Vagina (tissue), 2 donors: ENCODE measurements at regions of chr12 and their contacts with region 1.

Region 1: DNA sequence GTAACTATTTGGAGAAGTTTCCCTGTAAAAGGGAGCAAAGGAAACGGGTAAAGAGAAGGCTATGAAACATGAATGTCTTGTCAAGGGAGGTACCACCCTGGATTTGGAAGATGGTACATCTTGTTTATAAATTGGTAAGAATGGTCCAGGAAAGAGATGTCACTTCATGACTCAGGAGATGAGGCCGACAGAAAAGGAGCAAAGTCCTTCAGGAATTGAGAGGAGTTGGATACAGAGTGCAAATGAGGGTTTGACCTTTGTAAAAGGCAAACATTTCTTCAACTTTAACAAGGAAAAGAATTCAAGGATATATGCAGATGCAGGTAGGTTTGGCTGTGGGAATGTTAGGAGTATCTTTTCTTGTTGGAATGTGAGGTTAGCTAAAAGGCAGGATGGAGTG is 30.8 kb downstream of the NDUFA9 start:
- DNase-seq: no peak
- H3K4me3 ChIP-seq: no peak overlapping the region
- H3K27ac ChIP-seq: no peak overlapping the region
- H3K4me1 ChIP-seq: no peaks in the 10 kb centered on the region
- H3K27me3 ChIP-seq: no peaks in the 10 kb centered on the region
- CTCF ChIP-seq: no peak
- POLR2A ChIP-seq: no peak

Region 2: GRCh38 chr12:4356041-4356327 is 323.7 kb before region 1 on chr12:
- intact Hi-C with region 1: no loop called
- DNase-seq: no peak
- H3K4me3 ChIP-seq: no peak overlapping the region
- H3K27ac ChIP-seq: no peak overlapping the region
- H3K4me1 ChIP-seq: no peaks in the 10 kb centered on the region
- H3K27me3 ChIP-seq: no peaks in the 10 kb centered on the region
- CTCF ChIP-seq: no peak
- POLR2A ChIP-seq: no peak

Region 3: GRCh38 chr12:5601783-5602182 is 922.1 kb after region 1 on chr12:
- intact Hi-C with region 1: loop called (anchors 5 kb)
- DNase-seq: no peak
- H3K4me3 ChIP-seq: no peak overlapping the region
- H3K27ac ChIP-seq: no peak overlapping the region
- H3K4me1 ChIP-seq: no peaks in the 10 kb centered on the region
- H3K27me3 ChIP-seq: no peaks in the 10 kb centered on the region
- CTCF ChIP-seq: no peak
- POLR2A ChIP-seq: no peak